Lower leg skin (tissue), 4 donors: ENCODE measurements at regions of chr3 and their contacts with region 1.

Region 1: GRCh38 chr3:119885746-119886530 is 104.0 kb downstream of the NR1I2 start:
- DNase-seq: no peak
- H3K4me3 ChIP-seq: no peak overlapping the region
- CTCF ChIP-seq: no peak
- POLR2A ChIP-seq: no peak

Region 2: GRCh38 chr3:118144919-118145318 is 1741.0 kb before region 1 on chr3:
- intact Hi-C with region 1: no loop called
- DNase-seq: no peak
- H3K4me3 ChIP-seq: no peak overlapping the region
- CTCF ChIP-seq: no peak
- POLR2A ChIP-seq: no peak

Region 3: DNA sequence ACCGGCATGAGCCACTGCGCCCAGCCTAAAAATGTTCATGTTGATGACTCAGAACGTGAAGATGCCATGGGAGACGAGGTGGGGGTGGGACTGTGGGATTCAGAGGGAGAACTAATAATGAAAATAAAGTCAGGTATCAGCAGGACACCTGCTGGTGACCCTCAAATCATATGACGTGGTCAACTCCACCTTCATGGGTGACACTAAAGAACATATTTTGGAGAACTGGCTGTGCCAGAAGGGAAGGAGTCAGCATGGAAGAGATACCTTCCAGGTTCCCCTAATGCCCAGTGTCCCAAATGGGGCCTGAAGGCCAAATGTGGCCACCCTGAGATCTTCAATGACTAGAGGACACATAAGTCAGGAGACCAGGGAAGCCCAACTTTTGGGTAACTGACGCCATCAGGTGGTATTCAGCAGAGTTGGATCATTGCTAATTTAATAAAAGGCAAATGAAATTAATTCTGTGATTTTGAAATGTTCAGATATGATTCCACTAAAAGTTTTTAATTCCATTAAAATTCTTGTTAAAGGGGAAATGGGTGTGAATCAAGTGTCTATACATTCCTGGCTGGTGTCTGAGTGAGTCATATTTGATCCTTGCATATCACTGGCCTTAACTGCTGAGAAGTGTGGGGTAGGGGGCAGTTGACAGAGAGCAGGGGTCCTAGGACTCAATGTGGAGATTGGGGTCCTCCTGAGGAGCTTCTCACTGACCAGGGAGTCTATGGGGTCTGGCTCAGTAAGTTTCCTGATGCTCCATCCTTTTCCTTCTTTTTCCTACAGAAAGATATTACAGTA is 297.0 kb after region 1 on chr3:
- intact Hi-C with region 1: loop called (anchors 10 kb)
- DNase-seq: no peak
- H3K4me3 ChIP-seq: no peak overlapping the region
- CTCF ChIP-seq: no peak
- POLR2A ChIP-seq: no peak